CD8-positive, alpha-beta T cell (primary cell): ENCODE measurements at regions of chr14 and their contacts with region 1.

Region 1: DNA sequence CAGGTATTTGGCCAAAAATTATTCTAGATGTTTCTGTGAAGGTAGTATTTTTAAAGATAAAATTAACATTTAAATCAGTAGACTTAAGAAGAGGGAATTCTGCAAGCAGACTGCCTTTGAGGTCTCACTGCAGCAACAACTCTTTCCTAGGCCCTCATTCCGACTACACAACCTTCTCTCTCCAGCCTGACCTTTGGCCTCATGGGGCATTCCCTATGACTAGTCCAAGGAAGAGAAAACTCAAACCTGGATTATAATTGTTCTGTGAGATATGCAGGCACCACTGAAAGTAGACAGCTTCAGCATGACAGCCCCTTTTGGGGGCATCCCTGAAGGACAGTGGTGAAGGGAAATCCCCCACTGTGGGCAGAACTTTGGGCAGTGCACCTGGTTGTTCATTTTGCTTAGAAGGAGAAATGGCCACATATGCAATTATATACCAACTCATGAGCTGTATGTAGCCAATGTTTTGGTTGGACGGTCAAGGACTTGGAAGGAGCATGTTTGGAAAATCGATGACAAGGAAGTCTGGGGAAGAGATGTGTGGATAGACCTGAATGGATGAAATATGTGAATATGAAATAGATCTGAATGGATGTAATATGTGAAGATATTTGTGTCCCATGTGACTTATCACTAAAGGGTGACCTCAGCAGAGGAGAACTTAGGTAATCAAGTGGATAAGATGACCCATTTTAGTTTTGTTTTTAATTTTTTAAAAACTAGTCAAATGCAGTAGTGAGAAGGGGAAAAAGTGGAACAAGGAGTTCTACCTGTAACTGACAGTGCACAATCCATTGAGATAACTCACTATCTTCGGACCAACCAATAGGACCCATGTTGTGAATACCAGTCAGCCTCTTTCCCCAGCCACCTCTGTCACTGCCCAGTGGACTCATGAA is 233.3 kb upstream of the FOXN3 start:
- DNase-seq: no peak
- ATAC-seq: no peak
- H3K4me3 ChIP-seq: no peak overlapping the region
- H3K4me3 Mint-ChIP-seq: no peak overlapping the region
- H3K27ac ChIP-seq: no peak overlapping the region
- H3K27ac Mint-ChIP-seq: no peak overlapping the region
- H3K4me1 ChIP-seq: no peaks in the 10 kb centered on the region
- H3K4me1 Mint-ChIP-seq: peaks cover 5% of the 10 kb centered on the region
- H3K27me3 ChIP-seq: no peaks in the 10 kb centered on the region
- H3K27me3 Mint-ChIP-seq: no peaks in the 10 kb centered on the region
- CTCF ChIP-seq: no peak

Region 2: DNA sequence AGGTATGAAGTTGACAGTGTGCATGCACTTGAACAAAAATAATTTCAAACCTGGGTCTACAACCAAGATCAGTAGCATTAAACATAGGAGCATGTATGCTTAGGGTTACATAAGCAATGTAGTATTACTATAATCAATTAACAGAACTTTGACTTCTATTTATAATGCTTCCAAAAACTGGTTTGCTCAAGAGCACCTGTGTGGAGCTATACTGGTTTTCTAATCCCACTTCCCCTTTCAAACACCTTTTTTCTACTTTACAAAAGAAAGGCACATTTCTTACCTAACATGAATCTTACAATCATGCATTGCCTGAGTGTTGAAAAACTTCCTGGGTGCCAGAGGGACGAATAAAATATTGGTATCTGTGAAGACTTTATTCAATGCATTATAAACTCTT is 231.5 kb after region 1 on chr14:
- CTCF ChIA-PET with region 1: no interaction called
- POLR2A ChIA-PET with region 1: no interaction called
- intact Hi-C with region 1: loop called in 1 of 2 experiments (anchors 5 kb)
- DNase-seq: no peak
- ATAC-seq: no peak
- H3K4me3 ChIP-seq: no peak overlapping the region
- H3K4me3 Mint-ChIP-seq: no peak overlapping the region
- H3K27ac ChIP-seq: no peak overlapping the region
- H3K27ac Mint-ChIP-seq: no peak overlapping the region
- H3K4me1 ChIP-seq: no peaks in the 10 kb centered on the region
- H3K4me1 Mint-ChIP-seq: no peaks in the 10 kb centered on the region
- H3K27me3 ChIP-seq: no peaks in the 10 kb centered on the region
- H3K27me3 Mint-ChIP-seq: no peaks in the 10 kb centered on the region
- CTCF ChIP-seq: no peak